ENCODE measurements at regions of chr9 and their contacts with region 1.

Region 1: GRCh38 chr9:111896353-111896958 is at the start of gene UGCG:
- DNase-seq: peak; percentile 68 to 94 (median 84)
- ATAC-seq: peak; percentile 86
- H3K4me3 ChIP-seq: peak within 1 kb of the TSS; percentile 88
- H3K4me3 Mint-ChIP-seq: peak within 1 kb of the TSS; percentile 98
- H3K27ac ChIP-seq: peak within 1 kb of the TSS; percentile 64 to 67
- H3K27ac Mint-ChIP-seq: no peak within 1 kb of the TSS
- H3K4me1 ChIP-seq: peaks cover 25% of the 10 kb centered on the region
- H3K4me1 Mint-ChIP-seq: peaks cover 31% of the 10 kb centered on the region
- H3K27me3 ChIP-seq: no peaks in the 10 kb centered on the region
- H3K27me3 Mint-ChIP-seq: no peaks in the 10 kb centered on the region
- CTCF ChIP-seq: no peak
- total RNA-seq, gene UGCG: 42.1 to 44.0 TPM

Region 2: DNA sequence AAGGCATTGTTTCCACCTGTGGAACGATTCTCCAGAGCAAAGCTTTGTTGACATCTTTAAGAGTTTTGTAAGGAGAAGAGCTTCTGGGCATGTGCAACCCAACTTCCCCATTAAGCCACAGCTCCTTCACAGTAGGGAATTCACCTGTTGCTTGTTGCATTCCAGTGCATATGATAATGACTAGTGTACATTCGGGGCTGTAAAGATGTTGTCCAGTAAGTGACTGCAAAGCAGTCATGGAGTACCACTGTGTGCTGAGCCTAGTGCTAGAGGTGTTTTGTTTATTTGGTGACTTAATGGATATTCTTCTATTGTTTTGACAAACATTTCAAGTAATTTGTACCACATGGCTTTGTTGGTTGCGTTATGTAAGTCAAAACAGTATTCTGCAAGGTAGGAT is 13.0 kb after region 1 on chr9:
- CTCF ChIA-PET with region 1: no interaction called
- POLR2A ChIA-PET with region 1: interaction called, 19 read pairs
- intact Hi-C with region 1: loop called in 1 of 2 experiments (anchors 2 kb)
- DNase-seq: peak in 1 of 14 experiments; percentile 28
- ATAC-seq: no peak
- H3K4me3 ChIP-seq: no peak overlapping the region
- H3K4me3 Mint-ChIP-seq: peak overlapping the region; percentile 34
- H3K27ac ChIP-seq: no peak overlapping the region
- H3K27ac Mint-ChIP-seq: peak overlapping the region; percentile 60
- H3K4me1 ChIP-seq: peaks cover 72% of the 10 kb centered on the region
- H3K4me1 Mint-ChIP-seq: peaks cover 96% of the 10 kb centered on the region
- H3K27me3 ChIP-seq: no peaks in the 10 kb centered on the region
- H3K27me3 Mint-ChIP-seq: no peaks in the 10 kb centered on the region
- CTCF ChIP-seq: no peak

Region 3: DNA sequence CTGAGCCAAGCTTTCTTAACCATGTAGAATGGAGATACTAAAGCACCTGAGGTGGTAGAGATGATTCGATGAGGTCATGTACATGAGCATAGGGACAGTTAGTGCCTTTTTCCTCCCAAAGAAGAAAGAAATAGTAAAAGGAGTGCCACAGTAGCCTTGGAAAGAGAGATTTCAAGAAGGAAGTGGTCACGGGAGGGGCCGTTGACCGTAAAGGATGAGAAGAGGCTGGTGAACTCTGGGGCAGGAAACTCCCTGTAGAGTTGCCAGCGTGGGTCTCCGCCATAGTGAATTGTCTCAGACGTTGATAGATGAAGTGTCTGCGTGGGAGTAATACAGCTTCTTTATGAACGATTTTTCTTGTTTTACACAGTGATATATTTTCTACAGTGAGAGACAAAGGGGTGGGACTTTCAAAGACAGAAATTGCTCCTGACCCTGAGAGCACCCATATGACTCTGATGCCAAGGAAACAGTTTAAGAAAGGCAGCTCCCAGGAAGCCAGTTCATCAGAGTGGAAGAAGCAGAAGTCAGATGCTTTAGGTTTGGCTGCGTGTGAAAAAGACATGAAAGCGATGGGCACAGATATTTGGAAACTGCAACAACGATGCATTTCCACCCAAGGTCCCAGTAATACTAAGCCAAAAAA is 41.4 kb after region 1 on chr9:
- CTCF ChIA-PET with region 1: no interaction called
- POLR2A ChIA-PET with region 1: interaction called, 16 read pairs
- intact Hi-C with region 1: no loop called
- DNase-seq: peak; percentile 20 to 84 (median 43)
- ATAC-seq: peak; percentile 94
- H3K4me3 ChIP-seq: peak overlapping the region; percentile 39
- H3K4me3 Mint-ChIP-seq: peak overlapping the region; percentile 53
- H3K27ac ChIP-seq: peak overlapping the region; percentile 34 to 64
- H3K27ac Mint-ChIP-seq: peak overlapping the region; percentile 87
- H3K4me1 ChIP-seq: peaks cover 20% of the 10 kb centered on the region
- H3K4me1 Mint-ChIP-seq: peaks cover 40% of the 10 kb centered on the region
- H3K27me3 ChIP-seq: no peaks in the 10 kb centered on the region
- H3K27me3 Mint-ChIP-seq: no peaks in the 10 kb centered on the region
- CTCF ChIP-seq: no peak

Region 4: DNA sequence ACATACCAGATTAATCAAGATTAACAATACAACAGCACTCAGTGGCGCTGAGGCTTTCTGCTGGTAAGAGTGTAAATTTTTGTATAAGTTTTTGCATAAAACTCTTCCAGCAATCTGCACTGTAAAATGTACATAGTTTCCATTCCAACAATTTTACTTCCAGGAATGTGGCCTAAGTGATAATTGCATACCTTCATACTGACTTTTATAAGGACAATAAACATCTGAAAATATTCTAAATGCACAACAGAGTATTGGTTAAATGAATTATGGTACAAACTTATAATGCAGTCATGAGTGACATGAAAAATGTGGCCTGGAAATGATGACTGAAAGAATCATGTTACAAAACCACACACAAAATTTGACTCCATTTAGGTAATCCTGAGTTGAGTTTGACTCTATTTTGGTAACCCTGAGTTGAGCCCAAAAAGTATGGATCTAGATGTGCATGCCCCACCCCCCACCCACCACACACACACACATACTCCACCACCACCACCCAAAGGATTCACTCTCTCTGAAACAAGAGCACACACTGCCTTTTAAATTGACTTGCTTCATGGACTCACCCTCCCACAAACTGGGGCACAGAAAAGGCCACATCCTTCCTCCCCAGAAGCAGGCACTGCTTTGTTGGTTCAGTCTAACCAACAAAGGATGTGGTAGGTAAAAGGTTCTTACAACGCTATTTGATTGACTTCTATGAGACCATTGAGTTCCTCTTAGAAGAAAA is 141.0 kb after region 1 on chr9:
- CTCF ChIA-PET with region 1: no interaction called
- POLR2A ChIA-PET with region 1: interaction called, 12 read pairs
- intact Hi-C with region 1: loop called in 1 of 2 experiments (anchors 1 kb)
- DNase-seq: peak; percentile 37 to 93 (median 62)
- ATAC-seq: peak; percentile 98
- H3K4me3 ChIP-seq: peak overlapping the region; percentile 9
- H3K4me3 Mint-ChIP-seq: peak overlapping the region; percentile 82
- H3K27ac ChIP-seq: no peak overlapping the region
- H3K27ac Mint-ChIP-seq: peak overlapping the region; percentile 68
- H3K4me1 ChIP-seq: peaks cover 54% of the 10 kb centered on the region
- H3K4me1 Mint-ChIP-seq: peaks cover 67% of the 10 kb centered on the region
- H3K27me3 ChIP-seq: no peaks in the 10 kb centered on the region
- H3K27me3 Mint-ChIP-seq: peaks cover 4% of the 10 kb centered on the region
- CTCF ChIP-seq: no peak

Region 5: GRCh38 chr9:112379177-112380101 is 483.0 kb after region 1 on chr9:
- CTCF ChIA-PET with region 1: no interaction called
- POLR2A ChIA-PET with region 1: interaction called, 7 read pairs
- intact Hi-C with region 1: loop called in 1 of 2 experiments (anchors 5 kb)
- DNase-seq: peak; percentile 94 to 100 (median 98)
- ATAC-seq: peak; percentile 96
- H3K4me3 ChIP-seq: peak overlapping the region; percentile 98
- H3K4me3 Mint-ChIP-seq: peak overlapping the region; percentile 100
- H3K27ac ChIP-seq: peak overlapping the region; percentile 89 to 94
- H3K27ac Mint-ChIP-seq: peak overlapping the region; percentile 98
- H3K4me1 ChIP-seq: peaks cover 17% of the 10 kb centered on the region
- H3K4me1 Mint-ChIP-seq: peaks cover 64% of the 10 kb centered on the region
- H3K27me3 ChIP-seq: no peaks in the 10 kb centered on the region
- H3K27me3 Mint-ChIP-seq: no peaks in the 10 kb centered on the region
- CTCF ChIP-seq: no peak